Activated CD4-positive, alpha-beta T cell treated with anti-CD3 and anti-CD28 coated beads for 36 hours (primary cell): ENCODE measurements at regions of chr14 and their contacts with region 1.

Region 1: GRCh38 chr14:32363761-32364160 is 34.7 kb downstream of the AKAP6 start:
- DNase-seq: no peak
- ATAC-seq: no peak
- H3K4me3 Mint-ChIP-seq: no peak overlapping the region
- H3K27ac Mint-ChIP-seq: no peak overlapping the region
- H3K4me1 Mint-ChIP-seq: no peaks in the 10 kb centered on the region
- H3K27me3 Mint-ChIP-seq: peaks cover 2% of the 10 kb centered on the region

Region 2: GRCh38 chr14:32382704-32383103 is 18.9 kb after region 1 on chr14:
- CTCF ChIA-PET with region 1: interaction called, 3 read pairs
- POLR2A ChIA-PET with region 1: no interaction called
- intact Hi-C with region 1: loop called in 1 of 2 experiments (anchors 1 kb)
- DNase-seq: peak; percentile 6
- ATAC-seq: peak; percentile 42
- H3K4me3 Mint-ChIP-seq: no peak overlapping the region
- H3K27ac Mint-ChIP-seq: no peak overlapping the region
- H3K4me1 Mint-ChIP-seq: peaks cover 10% of the 10 kb centered on the region
- H3K27me3 Mint-ChIP-seq: peaks cover 6% of the 10 kb centered on the region

Region 3: GRCh38 chr14:32657081-32657480 is 293.3 kb after region 1 on chr14:
- CTCF ChIA-PET with region 1: no interaction called
- POLR2A ChIA-PET with region 1: no interaction called
- intact Hi-C with region 1: no loop called
- DNase-seq: no peak
- ATAC-seq: no peak
- H3K4me3 Mint-ChIP-seq: no peak overlapping the region
- H3K27ac Mint-ChIP-seq: no peak overlapping the region
- H3K4me1 Mint-ChIP-seq: no peaks in the 10 kb centered on the region
- H3K27me3 Mint-ChIP-seq: peaks cover 4% of the 10 kb centered on the region

Region 4: DNA sequence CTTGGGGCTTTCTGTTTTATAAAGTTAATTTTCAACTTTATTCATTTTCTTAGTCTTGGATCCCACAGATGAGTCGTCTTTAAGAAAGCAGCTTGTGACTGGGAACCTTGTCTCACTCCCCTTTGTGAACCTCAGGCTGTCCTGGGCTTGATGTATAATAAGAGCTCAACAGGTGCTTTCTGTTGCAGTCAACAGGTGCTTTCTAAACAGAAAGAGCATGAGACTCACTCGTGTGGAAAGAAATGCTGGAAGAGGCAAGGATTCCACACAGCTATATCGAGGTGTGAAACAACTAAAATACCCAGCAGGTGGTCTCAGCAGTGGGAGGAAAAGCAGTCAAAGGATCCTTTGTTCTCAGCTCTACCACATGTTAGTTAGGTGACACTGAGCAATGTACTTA is 1188.2 kb after region 1 on chr14:
- CTCF ChIA-PET with region 1: no interaction called
- POLR2A ChIA-PET with region 1: no interaction called
- intact Hi-C with region 1: no loop called
- DNase-seq: no peak
- ATAC-seq: no peak
- H3K4me3 Mint-ChIP-seq: no peak overlapping the region
- H3K27ac Mint-ChIP-seq: no peak overlapping the region
- H3K4me1 Mint-ChIP-seq: no peaks in the 10 kb centered on the region
- H3K27me3 Mint-ChIP-seq: peaks cover 2% of the 10 kb centered on the region